Ascending aorta (tissue), 2 donors: ENCODE measurements at regions of chr15 and their contacts with region 1.

Region 1: DNA sequence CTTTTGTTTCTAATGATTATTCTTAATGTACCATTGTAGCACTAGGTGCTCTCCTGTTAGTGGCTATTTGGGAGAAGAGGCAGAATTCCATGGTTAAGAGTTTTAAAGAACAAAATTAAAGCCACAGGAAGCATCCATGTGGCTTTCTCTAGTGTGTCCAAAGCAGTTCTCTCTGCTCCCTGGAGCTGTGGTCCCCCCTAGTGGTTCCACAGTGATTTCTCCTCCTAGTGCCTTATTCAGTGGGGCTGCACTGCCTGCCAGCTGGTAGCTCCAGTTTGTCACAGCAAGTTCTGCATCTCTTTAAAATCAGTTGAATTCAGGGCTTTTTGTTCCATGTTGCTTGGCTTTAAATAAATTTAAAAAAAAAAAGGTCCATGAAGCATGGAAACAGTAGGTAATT is 39.6 kb upstream of the FAM98B start:
- DNase-seq: peak in 1 of 2 donors; percentile 80
- H3K4me3 ChIP-seq: no peak overlapping the region
- H3K27ac ChIP-seq: no peak overlapping the region
- H3K4me1 ChIP-seq: no peaks in the 10 kb centered on the region
- H3K27me3 ChIP-seq: no peaks in the 10 kb centered on the region
- CTCF ChIP-seq: peak; percentile 52 to 79 (median 57)

Region 2: DNA sequence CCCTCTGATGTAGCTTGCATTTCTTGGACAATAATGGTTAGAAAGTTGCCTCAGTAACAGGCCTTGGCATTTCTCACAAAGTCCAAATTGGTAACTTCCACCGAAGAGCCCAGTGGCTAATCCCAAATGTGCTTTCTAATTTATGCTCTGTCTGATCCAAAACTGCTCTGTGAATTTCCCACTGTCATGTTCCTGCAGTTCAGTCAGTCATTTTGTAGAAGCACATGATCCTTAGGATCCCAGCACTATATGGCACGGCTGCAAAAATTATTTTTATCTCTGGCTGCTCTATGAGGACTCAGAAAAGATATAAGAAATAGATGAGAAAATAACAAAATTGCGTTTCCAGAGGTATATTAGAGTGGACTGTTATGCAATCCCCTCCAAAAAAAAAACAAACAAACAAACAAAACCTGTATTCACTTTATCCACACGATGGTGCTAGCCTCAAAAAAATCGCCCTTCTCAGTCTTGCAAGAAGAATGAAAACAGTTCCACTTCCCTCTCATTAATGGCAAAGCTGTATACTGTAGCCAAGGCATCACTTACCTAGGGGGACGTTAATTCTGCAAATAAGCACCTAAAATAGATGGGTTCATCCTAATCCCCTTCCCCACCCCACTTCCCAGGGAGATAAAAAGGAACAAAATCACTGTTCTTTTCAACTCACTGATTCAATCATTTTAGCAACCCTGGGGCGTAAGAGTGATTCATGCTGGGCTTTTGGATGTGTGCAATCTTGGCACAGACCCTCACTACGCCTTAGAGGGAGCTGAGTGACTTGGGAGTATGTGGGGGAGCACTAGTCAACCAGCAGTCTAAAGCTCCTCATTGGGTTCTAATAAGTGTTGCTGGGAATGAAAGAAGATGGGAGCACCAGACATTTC is 418.7 kb before region 1 on chr15:
- intact Hi-C with region 1: loop called (anchors 1 kb)
- DNase-seq: no peak
- H3K4me3 ChIP-seq: no peak overlapping the region
- H3K27ac ChIP-seq: no peak overlapping the region
- H3K4me1 ChIP-seq: no peaks in the 10 kb centered on the region
- H3K27me3 ChIP-seq: no peaks in the 10 kb centered on the region
- CTCF ChIP-seq: peak in 2 of 3 experiments; percentile 64 to 77

Region 3: DNA sequence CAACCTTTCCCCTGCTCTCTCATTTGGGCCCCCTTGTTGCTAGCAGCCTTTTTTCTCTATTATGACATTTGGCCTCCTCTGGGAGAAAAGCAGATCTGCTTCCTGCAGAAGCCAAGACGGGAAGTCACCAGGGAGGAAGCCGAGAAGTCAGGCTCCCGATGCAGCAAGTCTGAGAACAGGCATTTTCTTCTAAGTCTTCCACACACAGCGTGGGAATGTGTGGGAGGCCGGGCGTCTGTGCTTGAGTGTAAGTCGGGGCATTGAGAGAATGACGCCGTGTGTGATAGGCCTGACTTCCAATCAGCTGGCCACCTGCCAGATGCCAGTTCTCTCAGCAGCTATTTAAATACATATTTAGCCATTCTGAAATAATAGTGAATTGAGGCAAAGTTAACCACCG is 36.2 kb before region 1 on chr15:
- intact Hi-C with region 1: no loop called
- DNase-seq: peak in 1 of 2 donors; percentile 73
- H3K4me3 ChIP-seq: peak overlapping the region in 1 of 2 donors; percentile 35
- H3K27ac ChIP-seq: no peak overlapping the region
- H3K4me1 ChIP-seq: no peaks in the 10 kb centered on the region
- H3K27me3 ChIP-seq: no peaks in the 10 kb centered on the region
- CTCF ChIP-seq: no peak

Region 4: DNA sequence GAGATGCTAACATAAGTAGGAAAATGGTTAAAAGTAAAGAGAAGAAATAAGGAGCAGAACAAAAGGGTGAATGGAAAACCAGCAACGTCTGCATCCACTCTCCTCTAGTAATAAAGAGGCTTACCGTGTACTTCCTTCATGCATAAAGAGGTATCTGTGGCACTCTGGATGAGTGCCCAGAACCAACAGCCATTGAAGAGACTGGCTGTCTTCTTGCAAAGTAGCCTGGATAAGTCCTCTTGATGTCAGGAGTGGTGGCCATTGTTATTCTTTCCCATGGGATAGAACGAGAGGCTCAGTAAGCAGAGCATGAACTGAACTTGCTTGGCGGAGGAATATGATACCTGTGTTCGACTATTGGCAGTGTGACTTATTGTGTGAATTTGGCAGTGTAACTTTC is 336.4 kb after region 1 on chr15:
- intact Hi-C with region 1: no loop called
- DNase-seq: no peak
- H3K4me3 ChIP-seq: no peak overlapping the region
- H3K27ac ChIP-seq: no peak overlapping the region
- H3K4me1 ChIP-seq: no peaks in the 10 kb centered on the region
- H3K27me3 ChIP-seq: no peaks in the 10 kb centered on the region
- CTCF ChIP-seq: no peak